Testis (tissue), 5 donors: ENCODE measurements at regions of chr9 and their contacts with region 1.

Region 1: DNA sequence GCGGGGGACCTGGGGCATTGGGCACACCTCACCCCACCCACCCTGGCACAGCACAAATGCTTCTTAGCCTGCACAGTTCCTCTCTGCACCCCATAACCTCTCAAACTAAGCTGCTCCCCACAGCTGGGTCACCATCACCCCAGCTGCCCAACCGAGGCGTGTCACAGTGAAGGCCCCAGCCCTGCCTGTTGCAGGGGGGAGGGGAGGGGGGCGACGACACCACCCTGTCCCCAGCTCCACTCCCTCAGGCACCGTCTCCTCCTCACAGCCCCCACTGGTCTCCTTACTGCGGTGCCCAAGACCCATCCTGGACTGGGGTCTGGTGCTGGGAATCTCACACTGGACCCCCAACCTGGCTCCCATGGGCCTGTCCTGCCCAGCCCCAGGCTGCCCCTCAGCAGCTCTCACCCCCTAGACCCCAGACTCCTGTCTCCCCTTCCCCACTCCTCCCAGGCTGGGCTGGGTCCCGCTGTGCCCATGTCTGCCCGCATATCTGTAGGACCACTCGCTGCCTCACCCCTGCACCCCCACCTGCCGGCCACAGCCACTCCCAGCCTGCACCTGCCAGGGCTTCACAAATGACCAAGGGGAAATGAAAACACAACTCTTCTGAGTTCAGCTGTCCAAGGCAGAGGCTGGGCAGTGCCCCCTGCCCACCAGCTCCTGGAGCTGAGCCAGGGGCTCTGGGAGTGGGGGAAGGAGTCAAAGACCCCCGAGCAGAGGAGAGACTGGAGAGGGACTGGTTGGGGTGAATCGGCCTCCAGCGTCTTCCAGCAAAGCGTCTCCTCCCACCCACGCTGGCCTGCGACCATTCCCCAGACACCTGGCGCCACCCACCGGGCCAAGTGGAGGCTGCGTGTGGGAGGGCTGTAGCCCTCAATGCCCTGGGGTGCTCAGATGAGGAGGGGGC is 32.7 kb upstream of the EGFL7 start:
- DNase-seq: peak; percentile 61
- H3K4me3 ChIP-seq: no peak overlapping the region
- H3K27ac ChIP-seq: no peak overlapping the region
- H3K4me1 ChIP-seq: peaks cover 9% of the 10 kb centered on the region
- H3K27me3 ChIP-seq: no peaks in the 10 kb centered on the region
- CTCF ChIP-seq: peak; percentile 24 to 37 (median 30)
- POLR2A ChIP-seq: no peak

Region 2: GRCh38 chr9:136438909-136439549 is 191.0 kb before region 1 on chr9:
- intact Hi-C with region 1: no loop called
- DNase-seq: no peak
- H3K4me3 ChIP-seq: peak overlapping the region; percentile 82 to 86
- H3K27ac ChIP-seq: peak overlapping the region; percentile 52 to 87
- H3K4me1 ChIP-seq: peaks cover 32% of the 10 kb centered on the region
- H3K27me3 ChIP-seq: no peaks in the 10 kb centered on the region
- CTCF ChIP-seq: no peak
- POLR2A ChIP-seq: no peak

Region 3: GRCh38 chr9:136485049-136486045 is 144.7 kb before region 1 on chr9:
- intact Hi-C with region 1: loop called (anchors 5 kb)
- DNase-seq: peak; percentile 92
- H3K4me3 ChIP-seq: no peak overlapping the region
- H3K27ac ChIP-seq: no peak overlapping the region
- H3K4me1 ChIP-seq: peaks cover 26% of the 10 kb centered on the region
- H3K27me3 ChIP-seq: no peaks in the 10 kb centered on the region
- CTCF ChIP-seq: peak; percentile 84 to 92 (median 86)
- POLR2A ChIP-seq: no peak

Region 4: GRCh38 chr9:136694236-136694942 is 64.4 kb after region 1 on chr9:
- intact Hi-C with region 1: no loop called
- DNase-seq: no peak
- H3K4me3 ChIP-seq: no peak overlapping the region
- H3K27ac ChIP-seq: no peak overlapping the region
- H3K4me1 ChIP-seq: no peaks in the 10 kb centered on the region
- H3K27me3 ChIP-seq: no peaks in the 10 kb centered on the region
- CTCF ChIP-seq: peak in 2 of 3 experiments; percentile 31 to 53
- POLR2A ChIP-seq: no peak